Ovary (tissue), 10 donors: ENCODE measurements at regions of chr1 and their contacts with region 1.

Region 1: DNA sequence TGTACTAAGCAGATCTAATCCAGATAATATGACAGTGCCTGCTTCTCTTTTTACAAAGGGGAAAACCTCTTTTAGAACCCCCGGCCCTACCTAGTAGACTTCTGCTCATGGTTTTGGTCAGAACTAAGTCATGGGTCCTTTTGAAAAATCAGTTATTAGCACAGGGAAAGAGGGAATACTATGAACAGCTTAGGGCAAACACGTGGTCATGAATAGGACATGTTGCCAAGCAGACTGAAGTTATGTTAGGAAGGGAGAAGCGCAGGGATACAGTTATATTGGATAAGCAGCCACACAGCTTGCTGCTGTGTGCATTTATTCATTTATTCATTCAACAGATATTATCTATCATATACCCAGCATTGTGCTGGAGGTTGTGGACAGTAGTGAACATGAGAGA is 25.3 kb upstream of the IGSF3 start:
- DNase-seq: no peak
- H3K4me3 ChIP-seq: no peak overlapping the region
- H3K27ac ChIP-seq: no peak overlapping the region
- H3K4me1 ChIP-seq: no peaks in the 10 kb centered on the region
- H3K27me3 ChIP-seq: no peaks in the 10 kb centered on the region
- CTCF ChIP-seq: no peak
- EP300 ChIP-seq: no peak
- POLR2A ChIP-seq: no peak

Region 2: GRCh38 chr1:116682641-116683221 is 10.1 kb before region 1 on chr1:
- intact Hi-C with region 1: loop called in 1 of 4 experiments (anchors 1 kb)
- DNase-seq: no peak
- H3K4me3 ChIP-seq: no peak overlapping the region
- H3K27ac ChIP-seq: no peak overlapping the region
- H3K4me1 ChIP-seq: no peaks in the 10 kb centered on the region
- H3K27me3 ChIP-seq: no peaks in the 10 kb centered on the region
- CTCF ChIP-seq: no peak
- EP300 ChIP-seq: no peak
- POLR2A ChIP-seq: no peak